Activated T-helper 1 cell treated with anti-CD3 and anti-CD28 coated beads, Interleukin-12 subunit alpha, Interleukin-12 subunit beta, Interleukin-2, Interleukin-4 antibody, amounts not matched to agents 30 ng/mL and 10 ng/mL and 1 ng/mL, durations not matched to agents 14 hours and 24 hours and 36 hours (primary cell): ENCODE measurements at regions of chr17 and their contacts with region 1.

Region 1: DNA sequence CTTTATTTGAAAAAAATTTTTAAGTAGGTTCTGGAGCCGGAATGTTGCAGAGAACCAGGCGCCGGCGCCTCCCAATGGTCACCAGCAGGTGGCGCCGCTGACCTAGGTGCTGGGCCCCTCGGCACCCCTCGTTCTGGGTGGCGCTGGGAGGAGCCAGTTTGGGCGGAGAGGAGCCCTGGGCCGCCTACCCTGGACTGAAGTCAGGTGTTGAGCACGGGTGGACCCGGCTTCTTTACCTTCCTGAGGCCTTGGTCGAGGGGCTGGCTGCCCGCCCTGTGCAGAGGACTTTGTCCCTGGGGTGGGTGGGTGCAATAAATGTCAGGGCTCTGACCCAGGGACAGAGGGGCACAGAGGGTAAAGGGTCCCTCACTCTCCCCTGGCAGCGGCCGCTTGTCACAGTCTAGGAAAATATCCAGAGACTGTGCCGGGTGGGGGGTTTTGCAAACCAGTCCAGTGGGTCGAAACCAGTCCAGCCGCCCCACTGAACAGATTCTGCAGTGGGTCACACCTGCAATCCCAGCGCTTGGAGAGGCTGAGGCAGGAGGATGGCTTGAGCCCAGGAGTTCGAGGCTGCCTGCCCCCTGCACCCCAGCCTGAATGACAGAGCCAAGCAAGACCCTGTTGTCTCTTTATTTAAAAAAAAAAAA is 30.1 kb upstream of the TNFRSF13B start:
- DNase-seq: peak; percentile 66
- H3K4me3 Mint-ChIP-seq: no peak overlapping the region
- H3K27ac Mint-ChIP-seq: no peak overlapping the region
- H3K4me1 Mint-ChIP-seq: no peaks in the 10 kb centered on the region
- H3K27me3 Mint-ChIP-seq: peaks cover 4% of the 10 kb centered on the region

Region 2: GRCh38 chr17:17141860-17142552 is 140.0 kb after region 1 on chr17:
- intact Hi-C with region 1: loop called (anchors 2 kb)
- DNase-seq: peak; percentile 30
- H3K4me3 Mint-ChIP-seq: no peak overlapping the region
- H3K27ac Mint-ChIP-seq: peak overlapping the region; percentile 56
- H3K4me1 Mint-ChIP-seq: peaks cover under 1% of the 10 kb centered on the region
- H3K27me3 Mint-ChIP-seq: no peaks in the 10 kb centered on the region

Region 3: DNA sequence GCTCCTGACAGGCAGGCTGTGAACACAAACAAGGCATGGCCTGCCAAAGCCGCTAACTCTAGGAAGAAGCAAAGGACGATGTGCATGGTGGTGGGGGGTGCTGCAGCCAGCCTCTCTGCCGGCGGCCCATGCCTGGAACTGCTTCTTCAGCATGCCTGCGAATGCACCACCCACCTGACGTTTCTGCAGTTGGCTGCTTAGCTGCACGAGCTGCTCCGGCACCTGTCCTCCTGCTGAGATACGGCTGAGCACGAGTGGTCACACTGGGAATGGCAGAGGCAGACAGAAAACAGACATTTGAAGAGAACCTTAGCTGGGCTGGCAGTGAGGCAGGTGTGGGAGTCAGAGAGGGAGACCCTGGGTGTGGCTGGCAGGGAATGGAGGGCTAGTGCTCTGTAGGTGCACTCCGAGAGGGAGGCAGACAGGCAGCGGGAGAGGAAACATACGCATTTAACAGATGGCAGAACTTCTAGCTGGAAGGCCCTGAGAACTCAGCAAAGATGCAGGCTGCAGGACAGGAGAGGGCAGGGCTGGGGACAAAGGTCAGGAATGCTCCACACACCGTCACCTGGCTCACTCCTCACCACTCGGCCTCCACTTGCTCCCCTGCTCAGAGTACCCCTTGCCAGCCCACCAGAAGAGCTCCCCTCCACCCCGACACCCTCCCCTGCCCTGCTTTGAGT is 229.8 kb after region 1 on chr17:
- intact Hi-C with region 1: no loop called
- DNase-seq: no peak
- H3K4me3 Mint-ChIP-seq: no peak overlapping the region
- H3K27ac Mint-ChIP-seq: no peak overlapping the region
- H3K4me1 Mint-ChIP-seq: peaks cover 16% of the 10 kb centered on the region
- H3K27me3 Mint-ChIP-seq: no peaks in the 10 kb centered on the region

Region 4: GRCh38 chr17:17313350-17313991 is 311.5 kb after region 1 on chr17:
- intact Hi-C with region 1: loop called (anchors 1 kb)
- DNase-seq: peak; percentile 66
- H3K4me3 Mint-ChIP-seq: no peak overlapping the region
- H3K27ac Mint-ChIP-seq: no peak overlapping the region
- H3K4me1 Mint-ChIP-seq: peaks cover 6% of the 10 kb centered on the region
- H3K27me3 Mint-ChIP-seq: no peaks in the 10 kb centered on the region